ENCODE measurements at regions of chr15 and their contacts with region 1.

Region 1: GRCh38 chr15:79028411-79028964 is 62.1 kb downstream of the RASGRF1 start:
- DNase-seq: peak; percentile 25
- H3K4me3 ChIP-seq: no peak overlapping the region
- H3K27ac ChIP-seq: no peak overlapping the region
- H3K4me1 ChIP-seq: no peaks in the 10 kb centered on the region
- H3K27me3 ChIP-seq: no peaks in the 10 kb centered on the region
- CTCF ChIP-seq: peak; percentile 91 to 92

Region 2: DNA sequence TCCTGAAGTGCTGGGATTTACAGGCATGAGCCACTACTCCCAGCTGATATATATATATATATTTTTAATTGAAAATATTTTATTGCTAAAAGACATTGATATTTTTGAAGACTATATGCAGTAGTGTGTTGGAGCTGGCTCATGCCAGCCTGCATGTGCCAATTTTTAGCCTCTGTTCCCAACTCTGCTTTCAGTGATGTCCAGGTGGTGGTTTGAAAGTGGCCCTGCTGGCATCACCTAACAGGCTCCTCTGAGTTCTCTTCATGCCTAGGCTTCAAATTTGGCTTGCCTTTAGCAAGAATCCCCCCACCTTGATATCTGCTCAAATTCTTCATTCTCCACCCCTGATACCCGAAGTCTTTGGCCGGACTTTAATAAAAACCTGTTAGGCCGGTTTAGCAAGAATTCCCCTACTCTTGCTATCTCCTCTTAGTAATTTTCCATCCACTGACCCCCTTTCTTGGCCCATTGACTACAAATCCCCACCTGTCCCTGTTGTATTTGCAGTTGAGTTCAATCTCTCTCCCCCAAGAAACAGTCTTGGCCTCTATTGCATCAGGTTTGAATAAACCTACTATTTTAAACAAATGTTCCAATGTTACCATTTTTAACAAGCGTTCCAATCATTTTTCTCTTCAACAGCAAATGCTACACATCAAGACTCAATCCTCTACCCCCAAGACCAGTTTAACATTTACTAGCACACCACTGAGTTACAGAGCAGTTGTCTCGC is 59.8 kb before region 1 on chr15:
- CTCF ChIA-PET with region 1: no interaction called
- dilution Hi-C with region 1: no loop called
- in situ Hi-C with region 1: no loop called
- intact Hi-C with region 1: no loop called
- DNase-seq: peak; percentile 34
- H3K4me3 ChIP-seq: no peak overlapping the region
- H3K27ac ChIP-seq: no peak overlapping the region
- H3K4me1 ChIP-seq: peaks cover 8% of the 10 kb centered on the region
- H3K27me3 ChIP-seq: no peaks in the 10 kb centered on the region
- CTCF ChIP-seq: no peak

Region 3: DNA sequence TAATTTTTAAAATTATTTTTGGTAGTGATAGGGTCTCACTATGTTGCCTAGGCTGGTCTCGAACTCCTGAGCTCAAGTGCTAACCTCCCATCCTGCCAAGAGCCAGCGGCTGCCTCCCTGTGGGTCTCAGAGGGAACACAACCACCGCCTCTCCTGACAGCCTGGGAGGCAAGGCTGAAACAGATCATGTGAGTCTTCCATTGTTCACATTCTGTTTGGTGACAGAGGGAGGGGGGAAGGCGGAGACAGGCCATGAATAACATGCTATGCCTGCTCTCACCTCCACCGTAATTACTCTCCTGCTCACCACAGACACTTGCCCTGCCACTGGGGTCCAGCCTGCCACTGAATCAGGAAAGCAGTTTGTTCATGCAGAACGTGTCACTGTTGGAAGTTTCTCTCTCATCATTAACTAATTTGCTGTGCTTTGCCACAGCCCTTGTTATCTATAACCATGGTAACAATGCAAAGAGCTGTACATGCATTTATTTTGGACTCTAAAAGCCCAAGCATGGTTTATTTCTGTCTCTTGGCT is 140.5 kb after region 1 on chr15:
- CTCF ChIA-PET with region 1: no interaction called
- dilution Hi-C with region 1: no loop called
- in situ Hi-C with region 1: no loop called
- intact Hi-C with region 1: loop called (anchors 1 kb)
- DNase-seq: peak; percentile 36
- H3K4me3 ChIP-seq: no peak overlapping the region
- H3K27ac ChIP-seq: no peak overlapping the region
- H3K4me1 ChIP-seq: peaks cover 14% of the 10 kb centered on the region
- H3K27me3 ChIP-seq: no peaks in the 10 kb centered on the region
- CTCF ChIP-seq: peak in 1 of 2 donors; percentile 36

Region 4: DNA sequence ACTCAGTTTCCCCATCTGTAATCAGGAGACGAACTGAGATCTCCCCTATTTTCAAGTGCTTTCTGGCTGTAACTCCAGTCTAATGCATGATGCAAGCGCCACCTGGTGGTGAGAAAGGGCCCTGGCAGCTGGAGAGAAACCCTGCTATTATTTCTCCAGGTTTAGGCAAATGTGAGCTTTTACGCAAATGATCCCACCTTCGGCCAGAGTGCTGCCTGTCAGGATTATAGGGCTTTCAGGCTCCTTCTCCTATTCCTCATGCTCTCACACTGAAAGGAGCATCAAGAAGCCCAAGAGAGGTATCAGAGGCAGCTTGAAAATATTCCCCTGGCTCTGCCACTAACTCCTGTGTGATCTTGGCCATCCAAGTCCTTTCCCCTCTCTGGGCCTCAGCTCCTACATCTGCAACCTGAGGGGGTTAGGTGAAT is 156.0 kb after region 1 on chr15:
- CTCF ChIA-PET with region 1: interaction called, 20 read pairs
- dilution Hi-C with region 1: no loop called
- in situ Hi-C with region 1: loop called (anchors 5 kb)
- intact Hi-C with region 1: loop called (anchors 1 kb)
- DNase-seq: peak; percentile 42
- H3K4me3 ChIP-seq: no peak overlapping the region
- H3K27ac ChIP-seq: no peak overlapping the region
- H3K4me1 ChIP-seq: peaks cover 2% of the 10 kb centered on the region
- H3K27me3 ChIP-seq: no peaks in the 10 kb centered on the region
- CTCF ChIP-seq: peak; percentile 97

Measured in mammary epithelial cell (primary cell).